ENCODE measurements at regions of chr19 and their contacts with region 1.

Region 1: DNA sequence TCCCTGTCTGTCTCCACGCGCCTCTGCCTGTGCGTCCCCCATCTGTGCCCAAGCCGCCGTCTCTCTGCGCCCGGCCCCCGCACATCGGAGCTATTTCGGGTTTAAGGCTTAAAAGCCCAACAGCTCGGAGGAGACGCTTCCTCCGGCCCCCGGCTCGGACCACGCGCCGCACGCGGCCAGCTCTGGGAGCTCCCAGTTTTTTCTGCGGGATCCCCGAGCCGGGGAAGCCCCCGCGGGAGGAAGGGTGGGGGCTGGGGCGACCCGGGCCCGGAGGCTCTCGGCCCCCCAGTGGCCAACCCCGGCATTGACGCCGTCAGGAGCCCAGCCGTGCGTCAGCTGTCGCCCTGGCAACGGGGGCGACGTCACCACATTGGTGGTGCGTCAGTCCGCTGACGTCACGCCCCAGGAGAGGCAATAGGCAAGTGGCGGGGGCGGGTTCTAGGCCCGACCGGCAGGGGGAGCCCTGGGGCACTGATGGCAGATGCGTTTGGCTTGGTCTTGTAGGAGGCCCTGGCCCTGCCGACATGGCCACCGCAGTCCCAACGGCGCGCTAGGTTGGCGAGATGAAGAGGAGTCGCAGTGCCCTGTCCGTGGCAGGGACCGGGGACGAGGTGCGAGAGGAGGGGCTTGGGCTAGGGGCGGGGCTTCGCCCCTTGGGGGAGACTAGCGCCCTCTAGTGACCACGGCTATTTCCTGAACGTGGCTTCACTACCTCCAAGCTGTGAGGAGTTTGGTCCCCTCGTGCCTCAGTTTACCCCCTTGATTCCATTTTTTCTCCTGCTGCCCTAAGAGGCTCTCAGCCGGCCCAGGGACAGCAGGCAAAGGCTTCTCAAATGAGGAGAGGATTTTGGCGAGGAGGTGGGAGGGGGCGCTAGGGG is 3.7 kb upstream of the PDE4A start:
- DNase-seq: peak; percentile 99
- H3K4me3 Mint-ChIP-seq: peak overlapping the region; percentile 86
- H3K27ac Mint-ChIP-seq: peak overlapping the region; percentile 96
- H3K4me1 Mint-ChIP-seq: peaks cover 53% of the 10 kb centered on the region
- H3K27me3 Mint-ChIP-seq: peaks cover 8% of the 10 kb centered on the region

Region 2: GRCh38 chr19:10286803-10287737 is 129.5 kb before region 1 on chr19 and contains the start of gene ICAM4:
- intact Hi-C with region 1: no loop called
- DNase-seq: peak; percentile 88
- H3K4me3 Mint-ChIP-seq: peak within 1 kb of the TSS; percentile 67
- H3K27ac Mint-ChIP-seq: peak within 1 kb of the TSS; percentile 26
- H3K4me1 Mint-ChIP-seq: peaks cover 59% of the 10 kb centered on the region
- H3K27me3 Mint-ChIP-seq: peaks cover 30% of the 10 kb centered on the region
- total RNA-seq, gene ICAM4: 0.71 and 0.79 TPM in 2 replicates

Region 3: DNA sequence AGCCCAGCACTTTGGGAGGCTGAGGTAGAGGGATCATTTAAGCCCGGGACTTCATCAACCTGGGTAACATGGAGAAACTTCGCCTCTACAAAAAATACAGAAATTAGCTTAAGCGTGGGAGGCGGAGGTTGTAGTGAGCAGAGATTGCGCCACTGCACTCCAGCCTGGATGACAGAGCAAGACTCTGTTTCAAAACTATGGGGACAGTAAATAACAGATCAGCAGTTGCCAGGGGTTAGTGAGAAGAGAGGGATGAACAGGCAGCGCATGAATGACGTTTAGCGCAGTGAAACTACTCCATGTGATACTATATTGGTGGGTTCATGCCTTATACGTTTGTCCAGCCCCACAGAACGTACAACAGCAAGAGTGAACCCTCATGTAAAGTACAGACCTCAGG is 70.1 kb before region 1 on chr19:
- intact Hi-C with region 1: no loop called
- DNase-seq: no peak
- H3K4me3 Mint-ChIP-seq: no peak overlapping the region
- H3K27ac Mint-ChIP-seq: no peak overlapping the region
- H3K4me1 Mint-ChIP-seq: peaks cover 2% of the 10 kb centered on the region
- H3K27me3 Mint-ChIP-seq: no peaks in the 10 kb centered on the region

Region 4: DNA sequence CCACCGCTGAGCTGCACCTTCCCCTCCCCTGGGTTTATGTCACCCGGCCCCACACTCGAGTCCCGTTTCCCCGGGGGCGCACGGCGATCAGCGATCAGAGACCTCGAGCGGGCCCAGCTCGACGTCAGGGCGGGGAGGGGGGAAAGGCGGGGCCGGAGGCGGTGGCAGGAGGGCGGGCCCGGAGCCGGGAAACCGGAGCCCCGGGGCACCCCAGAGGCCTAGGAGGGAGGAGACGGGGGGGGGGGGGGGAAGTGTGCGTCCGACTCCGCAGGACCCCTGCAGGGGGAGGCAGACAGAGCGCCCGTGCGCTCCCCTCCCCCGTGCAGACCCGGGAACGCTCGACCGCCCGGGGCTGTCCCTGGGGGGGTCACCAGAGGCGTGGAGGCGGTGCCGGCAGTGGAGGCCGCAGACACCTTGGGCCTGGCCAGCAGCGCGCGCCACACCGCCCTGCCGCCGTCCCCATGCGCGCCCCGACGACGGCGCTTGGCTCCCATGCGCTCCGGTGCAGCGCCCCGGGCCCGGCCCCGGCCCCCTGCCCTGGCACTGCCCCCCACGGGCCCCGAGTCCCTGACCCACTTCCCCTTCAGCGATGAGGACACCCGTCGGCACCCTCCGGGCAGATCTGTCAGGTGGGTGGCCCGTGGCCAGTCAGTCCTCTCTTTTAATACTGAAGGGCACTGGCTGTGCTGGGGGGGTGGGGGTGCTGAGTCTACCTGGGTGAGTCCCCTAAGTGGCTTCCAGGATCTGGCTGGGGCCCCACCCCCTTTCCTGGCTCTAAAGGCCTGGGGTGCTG is 15.5 kb after region 1 on chr19:
- intact Hi-C with region 1: loop called (anchors 1 kb)
- DNase-seq: peak; percentile 88
- H3K4me3 Mint-ChIP-seq: peak overlapping the region; percentile 91
- H3K27ac Mint-ChIP-seq: peak overlapping the region; percentile 90
- H3K4me1 Mint-ChIP-seq: peaks cover 66% of the 10 kb centered on the region
- H3K27me3 Mint-ChIP-seq: peaks cover 13% of the 10 kb centered on the region

Region 5: GRCh38 chr19:10449037-10449436 is 32.4 kb after region 1 on chr19:
- intact Hi-C with region 1: no loop called
- DNase-seq: no peak
- H3K4me3 Mint-ChIP-seq: no peak overlapping the region
- H3K27ac Mint-ChIP-seq: no peak overlapping the region
- H3K4me1 Mint-ChIP-seq: peaks cover 25% of the 10 kb centered on the region
- H3K27me3 Mint-ChIP-seq: no peaks in the 10 kb centered on the region

Region 6: GRCh38 chr19:10478903-10479384 is 62.3 kb after region 1 on chr19:
- intact Hi-C with region 1: loop called (anchors 5 kb)
- DNase-seq: peak; percentile 96
- H3K4me3 Mint-ChIP-seq: peak overlapping the region; percentile 77
- H3K27ac Mint-ChIP-seq: peak overlapping the region; percentile 78
- H3K4me1 Mint-ChIP-seq: peaks cover 13% of the 10 kb centered on the region
- H3K27me3 Mint-ChIP-seq: no peaks in the 10 kb centered on the region

Region 7: DNA sequence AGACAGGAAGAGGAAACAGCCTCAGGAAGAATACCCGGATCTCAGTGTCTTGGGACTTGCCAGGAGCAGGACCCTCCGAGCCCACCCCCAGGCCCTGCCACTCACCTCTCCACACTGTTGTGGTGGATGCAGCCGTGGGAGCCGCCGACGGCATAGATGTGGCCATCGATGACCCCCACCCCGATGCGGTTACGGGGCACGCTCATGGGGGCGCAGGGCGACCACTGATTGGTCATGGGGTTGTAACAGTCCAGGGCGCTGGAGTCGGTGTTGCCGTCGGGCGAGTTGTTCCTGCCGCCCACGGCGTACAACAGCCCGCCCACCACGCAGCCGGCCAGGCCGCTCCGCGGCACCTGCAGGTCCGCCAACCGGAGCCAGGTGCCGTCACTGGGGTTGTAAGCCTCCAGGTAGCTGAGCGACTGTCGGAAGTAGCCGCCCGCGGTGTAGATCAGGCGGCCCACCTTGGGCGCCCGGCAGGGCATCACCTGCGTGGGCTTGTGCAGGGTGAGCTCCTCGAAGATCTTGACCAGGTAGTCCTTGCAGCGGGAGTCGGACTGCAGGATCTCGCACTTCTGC is 74.9 kb after region 1 on chr19:
- intact Hi-C with region 1: no loop called
- DNase-seq: no peak
- H3K4me3 Mint-ChIP-seq: no peak overlapping the region
- H3K27ac Mint-ChIP-seq: no peak overlapping the region
- H3K4me1 Mint-ChIP-seq: peaks cover 11% of the 10 kb centered on the region
- H3K27me3 Mint-ChIP-seq: no peaks in the 10 kb centered on the region

Measured in activated CD4-positive, alpha-beta T cell treated with anti-CD3 and anti-CD28 coated beads, Interleukin-2, amount 10 ng/mL, durations not matched to agents 24 days and 14 days (primary cell).